ENCODE measurements at regions of chr4 and their contacts with region 1.

Region 1: GRCh38 chr4:25234390-25235370 is 847 bp downstream of the PI4K2B start:
- DNase-seq: peak in 39 of 42 donors; percentile 3 to 68 (median 33)

Region 2: GRCh38 chr4:25312496-25313200 is 78.0 kb after region 1 on chr4 and contains the start of gene ZCCHC4:
- intact Hi-C with region 1: loop called (anchors 5 kb)
- DNase-seq: peak; percentile 87 to 97 (median 93)

Region 3: DNA sequence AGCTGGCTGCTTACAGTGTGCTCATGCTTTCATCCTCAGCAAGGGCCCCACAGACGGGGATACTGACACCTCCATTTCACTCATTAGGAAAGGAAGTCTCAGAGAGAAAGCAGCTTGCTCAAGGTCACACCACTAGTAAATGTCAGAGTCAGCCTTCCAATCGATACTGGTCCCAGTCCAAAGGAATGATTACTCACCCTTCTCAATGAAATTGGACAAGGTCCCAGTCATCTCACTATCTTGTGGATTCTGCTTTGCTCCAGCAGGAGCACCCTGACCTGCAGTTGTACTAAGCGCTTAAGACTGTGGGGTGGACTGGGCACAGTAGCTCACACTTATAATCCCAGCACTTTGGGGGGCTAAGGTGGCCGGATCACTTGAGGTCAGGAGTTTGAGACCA is 288.7 kb after region 1 on chr4:
- intact Hi-C with region 1: no loop called
- DNase-seq: no peak

Measured in head of caudate nucleus (tissue), 42 donors.